CD4-positive, alpha-beta memory T cell (primary cell): ENCODE measurements at regions of chr1 and their contacts with region 1.

Region 1: DNA sequence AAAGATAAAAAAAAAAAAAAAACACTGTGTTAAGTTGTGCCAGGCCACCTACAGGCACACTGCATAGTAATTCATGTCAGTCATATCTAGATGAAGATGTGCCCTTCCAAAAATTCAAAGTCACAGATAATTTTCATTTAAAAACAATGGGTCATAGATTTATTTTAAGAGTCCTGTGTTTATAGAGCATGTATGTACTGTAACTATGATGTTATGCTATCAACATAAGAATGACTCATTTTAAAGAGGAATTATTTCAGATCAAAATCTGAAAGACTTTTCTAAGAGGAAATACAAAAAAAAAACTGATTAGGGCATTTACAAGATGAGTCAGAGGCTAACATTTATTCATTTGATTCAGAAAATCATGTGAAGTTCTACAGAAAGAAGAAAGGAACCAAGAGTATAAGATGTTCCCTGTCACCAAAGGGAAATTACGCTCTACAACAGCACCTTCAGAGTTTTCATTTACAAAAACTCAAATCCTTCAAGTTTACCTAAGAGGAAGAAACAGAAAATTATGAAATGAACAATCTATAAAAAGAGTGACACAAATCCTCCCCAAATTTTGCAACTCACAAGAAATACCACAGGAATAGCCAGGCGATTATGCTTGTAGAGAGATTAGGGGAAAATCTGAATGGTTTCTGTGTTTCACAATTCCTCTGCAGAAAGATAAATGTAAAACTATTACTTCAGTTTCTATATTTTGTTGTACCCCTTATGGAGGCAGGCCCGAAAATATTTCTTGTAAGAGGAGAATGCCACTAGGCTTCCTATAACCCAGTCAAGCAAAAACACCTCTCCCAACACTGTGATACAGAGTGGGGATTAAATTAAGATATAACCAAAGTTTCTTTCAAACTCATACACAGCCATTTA is 13.8 kb downstream of the TP53BP2 start:
- DNase-seq: peak; percentile 20 to 54 (median 52)
- H3K4me3 ChIP-seq: no peak overlapping the region
- H3K4me3 Mint-ChIP-seq: peak overlapping the region; percentile 43 to 81 (median 66)
- H3K27ac ChIP-seq: peak overlapping the region; percentile 70
- H3K27ac Mint-ChIP-seq: peak overlapping the region in 4 of 7 donors; percentile 57 to 97 (median 84)
- H3K4me1 ChIP-seq: peaks cover 69% of the 10 kb centered on the region
- H3K4me1 Mint-ChIP-seq: peaks cover 20 to 30% (median 25%) of the 10 kb centered on the region in 4 donors
- H3K27me3 ChIP-seq: no peaks in the 10 kb centered on the region
- H3K27me3 Mint-ChIP-seq: no peaks in the 10 kb centered on the region

Region 2: GRCh38 chr1:223771814-223772770 is 59.9 kb before region 1 on chr1:
- CTCF ChIA-PET with region 1: no interaction called
- POLR2A ChIA-PET with region 1: no interaction called
- intact Hi-C with region 1: loop called (anchors 5 kb)
- DNase-seq: no peak
- H3K4me3 ChIP-seq: no peak overlapping the region
- H3K4me3 Mint-ChIP-seq: no peak overlapping the region
- H3K27ac ChIP-seq: no peak overlapping the region
- H3K27ac Mint-ChIP-seq: peak overlapping the region; percentile 43 to 82 (median 60)
- H3K4me1 ChIP-seq: peaks cover 15% of the 10 kb centered on the region
- H3K4me1 Mint-ChIP-seq: peaks cover 15 to 34% (median 22%) of the 10 kb centered on the region in 4 donors
- H3K27me3 ChIP-seq: no peaks in the 10 kb centered on the region
- H3K27me3 Mint-ChIP-seq: no peaks in the 10 kb centered on the region

Region 3: DNA sequence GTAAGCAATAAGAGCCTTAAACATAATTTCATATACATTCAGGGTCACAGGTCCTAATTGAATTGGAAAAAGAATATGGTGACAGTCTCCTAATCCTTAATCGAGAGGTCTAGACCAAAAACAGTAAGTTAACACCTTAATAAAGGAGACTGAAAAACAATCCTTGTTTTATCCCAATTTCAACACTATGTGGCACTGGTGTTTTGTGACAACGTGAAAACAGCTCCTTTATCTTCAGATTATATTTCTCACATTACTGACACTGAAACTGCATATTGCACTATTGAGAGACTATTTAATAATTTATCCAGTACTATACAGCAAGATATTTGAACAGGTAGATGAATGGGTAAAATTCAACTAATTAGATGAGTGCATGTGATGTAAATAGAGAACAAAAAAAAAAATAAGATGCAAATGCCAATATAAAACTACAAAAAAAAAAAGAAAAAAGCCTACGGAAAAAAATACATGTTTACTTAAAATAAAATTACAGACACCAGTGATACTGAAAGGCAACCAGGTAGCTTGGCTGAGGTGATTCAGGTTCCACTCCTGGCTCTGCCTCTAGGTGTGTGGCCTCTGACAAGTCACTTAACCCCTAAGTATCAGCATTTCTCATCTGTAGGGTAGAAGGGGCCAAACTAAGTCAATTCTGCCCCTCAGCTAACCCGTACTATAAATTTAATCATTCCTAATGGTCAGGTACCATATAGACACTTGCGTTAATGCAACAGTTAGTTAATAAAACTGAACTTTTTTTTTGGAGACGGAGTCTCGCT is 20.2 kb before region 1 on chr1:
- CTCF ChIA-PET with region 1: interaction called, 10 read pairs
- POLR2A ChIA-PET with region 1: interaction called, 3 read pairs
- intact Hi-C with region 1: no loop called
- DNase-seq: peak in 4 of 5 donors; percentile 40 to 51 (median 47)
- H3K4me3 ChIP-seq: no peak overlapping the region
- H3K4me3 Mint-ChIP-seq: no peak overlapping the region
- H3K27ac ChIP-seq: no peak overlapping the region
- H3K27ac Mint-ChIP-seq: peak overlapping the region in 3 of 7 donors; percentile 27 to 72 (median 57)
- H3K4me1 ChIP-seq: peaks cover 17% of the 10 kb centered on the region
- H3K4me1 Mint-ChIP-seq: peaks cover 23 to 37% (median 32%) of the 10 kb centered on the region in 4 donors
- H3K27me3 ChIP-seq: no peaks in the 10 kb centered on the region
- H3K27me3 Mint-ChIP-seq: no peaks in the 10 kb centered on the region

Region 4: DNA sequence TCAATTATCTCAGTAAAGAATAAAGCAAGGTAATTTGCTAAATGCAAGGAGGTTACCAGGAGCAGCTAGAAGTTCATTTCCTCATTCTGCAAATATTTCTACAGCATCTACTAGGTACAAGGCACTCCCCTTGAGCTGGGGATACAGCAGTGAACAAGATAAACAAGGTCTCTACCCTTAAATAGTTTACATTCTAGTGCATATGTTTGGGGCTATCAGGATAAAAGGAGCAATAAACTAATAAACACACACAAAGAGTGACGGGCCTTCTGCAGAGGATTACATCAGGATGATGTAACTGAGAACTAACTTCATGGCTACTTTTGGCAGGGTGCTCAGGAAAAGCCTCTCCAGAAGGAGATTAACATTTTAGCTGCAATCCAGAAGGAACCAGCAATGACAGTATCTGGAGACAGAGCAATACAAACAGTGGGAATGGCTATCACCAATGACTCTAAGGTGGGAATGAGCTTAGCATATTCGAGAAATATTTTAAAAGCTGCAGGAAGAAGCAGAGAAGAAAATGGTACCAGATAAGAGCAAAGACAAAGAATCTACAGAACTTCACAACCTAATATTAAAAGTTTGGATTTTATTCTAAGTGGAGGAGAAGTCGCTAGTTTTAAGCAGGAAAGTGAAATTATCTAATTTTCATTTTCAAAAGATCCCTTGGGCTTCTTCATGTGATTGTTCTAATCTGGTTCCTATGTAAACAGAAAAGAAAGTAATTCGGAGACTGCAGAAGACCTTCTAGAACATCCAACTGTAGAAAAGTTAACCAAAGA is 12.1 kb before region 1 on chr1:
- CTCF ChIA-PET with region 1: interaction called, 4 read pairs
- POLR2A ChIA-PET with region 1: interaction called, 3 read pairs
- intact Hi-C with region 1: loop called (anchors 2 kb)
- DNase-seq: no peak
- H3K4me3 ChIP-seq: no peak overlapping the region
- H3K4me3 Mint-ChIP-seq: no peak overlapping the region
- H3K27ac ChIP-seq: no peak overlapping the region
- H3K27ac Mint-ChIP-seq: peak overlapping the region in 6 of 7 donors; percentile 30 to 76 (median 54)
- H3K4me1 ChIP-seq: peaks cover 23% of the 10 kb centered on the region
- H3K4me1 Mint-ChIP-seq: peaks cover 33 to 52% (median 41%) of the 10 kb centered on the region in 4 donors
- H3K27me3 ChIP-seq: no peaks in the 10 kb centered on the region
- H3K27me3 Mint-ChIP-seq: no peaks in the 10 kb centered on the region